GM10248 (cell line): ENCODE measurements at regions of chr4 and their contacts with region 1.

Region 1: GRCh38 chr4:169024762-169025161 is 14.7 kb upstream of the CBR4 start:
- DNase-seq: peak; percentile 59
- CTCF ChIP-seq: peak; percentile 59

Region 2: DNA sequence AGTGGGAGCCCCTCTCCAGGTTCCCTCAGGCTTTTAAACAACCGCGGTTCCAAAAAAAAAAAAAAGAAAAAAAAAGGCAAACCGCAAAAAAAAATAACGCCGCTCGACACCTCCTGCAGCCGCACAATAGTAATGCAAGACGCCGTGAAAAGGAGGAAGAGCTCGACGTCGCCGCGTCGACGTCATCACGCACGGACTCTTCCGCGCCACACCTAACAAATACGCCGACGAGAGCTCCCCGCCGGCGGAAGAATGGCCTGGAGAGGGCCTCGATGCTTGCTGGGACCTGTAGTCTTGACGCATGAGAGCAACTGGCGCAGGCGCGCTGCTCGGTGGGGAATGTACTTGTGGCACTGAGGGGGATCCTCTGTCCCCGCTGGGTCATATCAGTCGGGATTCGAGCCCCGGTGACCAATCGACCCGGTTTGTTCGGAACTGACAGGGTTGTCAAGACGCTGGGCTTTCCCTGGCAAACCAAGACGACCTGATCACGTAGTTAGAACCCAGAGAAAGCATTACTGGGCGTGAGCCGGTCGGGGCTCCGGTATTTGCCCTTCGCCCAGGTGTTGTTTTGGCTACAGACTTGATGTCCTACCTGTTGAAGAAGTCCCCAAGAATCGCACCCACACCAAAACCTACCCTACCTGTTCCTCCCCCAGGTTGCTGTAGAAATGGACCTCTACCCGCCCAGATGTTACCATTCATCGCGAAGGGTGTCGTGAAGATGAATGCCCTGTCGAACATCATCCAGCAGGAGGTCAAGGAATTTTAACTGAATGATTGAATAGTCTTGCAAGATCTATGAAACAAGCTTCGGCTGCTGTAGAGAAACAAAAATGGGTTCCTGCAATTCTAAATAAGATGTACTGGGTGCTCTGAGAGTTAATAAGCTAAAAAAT is 14.4 kb before region 1 on chr4 and contains the start of gene CBR4:
- CTCF ChIA-PET with region 1: interaction called, 16 read pairs
- POLR2A ChIA-PET with region 1: no interaction called
- DNase-seq: peak; percentile 91
- CTCF ChIP-seq: peak; percentile 3

Region 3: DNA sequence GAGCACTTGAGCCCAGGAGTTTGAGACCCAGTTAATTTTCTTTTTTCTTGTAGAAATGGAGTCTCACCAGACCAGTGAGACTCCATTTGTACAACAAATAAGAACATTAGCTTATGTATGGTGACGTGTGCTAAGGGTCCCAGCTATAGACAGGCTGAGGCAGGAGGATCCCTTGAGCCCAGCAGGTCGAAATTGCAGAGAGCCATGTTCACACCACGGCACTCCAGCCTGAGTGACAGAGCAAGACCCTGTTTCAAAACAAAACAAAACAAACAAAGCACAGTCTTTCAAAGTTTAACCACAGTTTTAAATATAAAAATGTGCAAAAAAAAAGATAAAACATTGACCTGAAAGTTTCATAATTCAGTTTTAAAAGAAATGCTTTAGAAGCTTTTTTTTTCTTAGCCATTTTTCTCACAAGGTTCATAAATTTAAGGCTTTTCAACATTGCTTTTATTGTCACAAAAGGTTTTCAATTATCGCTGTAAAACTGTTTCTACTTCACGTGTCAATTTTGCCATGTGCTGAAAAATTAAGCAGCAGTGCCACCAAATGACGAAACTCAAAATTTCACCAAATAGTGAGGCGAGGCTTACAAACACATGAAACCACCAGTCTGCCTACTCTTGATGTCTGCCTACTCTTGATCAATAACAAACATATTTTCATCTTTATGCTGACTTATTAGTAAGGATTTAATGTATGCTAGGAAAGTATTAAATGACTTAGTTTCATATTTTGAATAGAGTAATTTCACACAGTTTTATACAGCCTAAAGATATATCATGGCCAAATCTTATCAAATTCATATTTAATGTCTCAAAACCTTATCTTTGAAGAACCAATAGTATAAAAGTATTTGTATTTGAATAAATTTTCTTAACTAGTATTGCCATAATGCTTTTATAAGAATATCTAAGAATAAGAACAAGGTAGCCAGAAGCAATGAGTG is 461.3 kb after region 1 on chr4:
- CTCF ChIA-PET with region 1: interaction called, 16 read pairs
- POLR2A ChIA-PET with region 1: no interaction called
- DNase-seq: peak; percentile 48
- CTCF ChIP-seq: peak; percentile 67

Region 4: DNA sequence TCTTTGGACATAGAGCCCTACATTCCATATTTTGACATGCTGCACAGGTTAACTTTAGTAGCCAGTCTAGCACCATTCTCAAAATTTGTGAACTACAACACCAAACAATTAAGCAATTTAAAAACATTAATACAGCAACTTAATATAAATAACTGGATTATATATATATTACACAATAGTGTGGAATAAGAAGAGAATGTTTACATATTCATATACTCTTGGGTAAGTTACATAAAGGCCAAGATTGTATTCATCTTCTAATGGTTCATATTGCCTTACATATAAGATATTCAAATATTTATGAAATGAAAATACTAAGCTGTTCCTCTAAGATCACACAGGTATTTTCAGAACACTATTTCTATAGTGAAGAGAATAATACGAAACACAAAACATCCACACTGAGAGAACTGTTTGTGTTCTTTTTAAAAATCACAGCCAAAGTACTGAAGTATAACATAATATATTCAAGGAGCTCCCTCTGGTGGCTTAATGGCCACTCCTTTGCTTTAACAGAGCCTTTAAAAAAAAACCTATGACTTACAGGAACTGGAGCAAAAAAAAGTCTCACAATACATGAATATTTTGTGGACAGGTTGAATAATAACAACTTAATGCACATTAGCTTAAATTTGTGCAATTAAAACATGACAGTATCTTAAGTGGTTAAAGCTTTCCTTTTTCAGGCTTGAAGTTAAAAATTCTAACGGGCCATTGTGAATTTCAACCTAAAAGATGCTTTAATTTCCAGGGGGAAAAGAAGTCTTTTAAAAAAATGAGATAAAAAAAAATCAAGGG is 541.5 kb after region 1 on chr4:
- CTCF ChIA-PET with region 1: interaction called, 13 read pairs
- POLR2A ChIA-PET with region 1: no interaction called
- DNase-seq: peak; percentile 53
- CTCF ChIP-seq: peak; percentile 57